ENCODE measurements at regions of chr12 and their contacts with region 1.

Region 1: GRCh38 chr12:93502802-93503623 is 35.7 kb downstream of the MRPL42 start:
- DNase-seq: peak; percentile 48 to 75
- H3K4me3 ChIP-seq: no peak overlapping the region
- H3K27ac ChIP-seq: no peak overlapping the region
- H3K4me1 ChIP-seq: no peaks in the 10 kb centered on the region
- H3K27me3 ChIP-seq: no peaks in the 10 kb centered on the region
- CTCF ChIP-seq: peak in 5 of 7 experiments; percentile 49 to 80 (median 74)
- EP300 ChIP-seq: no peak
- POLR2A ChIP-seq: no peak

Region 2: GRCh38 chr12:93550748-93551611 is 48.0 kb after region 1 on chr12:
- intact Hi-C with region 1: no loop called
- DNase-seq: no peak
- H3K4me3 ChIP-seq: no peak overlapping the region
- H3K27ac ChIP-seq: no peak overlapping the region
- H3K4me1 ChIP-seq: no peaks in the 10 kb centered on the region
- H3K27me3 ChIP-seq: no peaks in the 10 kb centered on the region
- CTCF ChIP-seq: no peak
- EP300 ChIP-seq: no peak
- POLR2A ChIP-seq: no peak

Region 3: DNA sequence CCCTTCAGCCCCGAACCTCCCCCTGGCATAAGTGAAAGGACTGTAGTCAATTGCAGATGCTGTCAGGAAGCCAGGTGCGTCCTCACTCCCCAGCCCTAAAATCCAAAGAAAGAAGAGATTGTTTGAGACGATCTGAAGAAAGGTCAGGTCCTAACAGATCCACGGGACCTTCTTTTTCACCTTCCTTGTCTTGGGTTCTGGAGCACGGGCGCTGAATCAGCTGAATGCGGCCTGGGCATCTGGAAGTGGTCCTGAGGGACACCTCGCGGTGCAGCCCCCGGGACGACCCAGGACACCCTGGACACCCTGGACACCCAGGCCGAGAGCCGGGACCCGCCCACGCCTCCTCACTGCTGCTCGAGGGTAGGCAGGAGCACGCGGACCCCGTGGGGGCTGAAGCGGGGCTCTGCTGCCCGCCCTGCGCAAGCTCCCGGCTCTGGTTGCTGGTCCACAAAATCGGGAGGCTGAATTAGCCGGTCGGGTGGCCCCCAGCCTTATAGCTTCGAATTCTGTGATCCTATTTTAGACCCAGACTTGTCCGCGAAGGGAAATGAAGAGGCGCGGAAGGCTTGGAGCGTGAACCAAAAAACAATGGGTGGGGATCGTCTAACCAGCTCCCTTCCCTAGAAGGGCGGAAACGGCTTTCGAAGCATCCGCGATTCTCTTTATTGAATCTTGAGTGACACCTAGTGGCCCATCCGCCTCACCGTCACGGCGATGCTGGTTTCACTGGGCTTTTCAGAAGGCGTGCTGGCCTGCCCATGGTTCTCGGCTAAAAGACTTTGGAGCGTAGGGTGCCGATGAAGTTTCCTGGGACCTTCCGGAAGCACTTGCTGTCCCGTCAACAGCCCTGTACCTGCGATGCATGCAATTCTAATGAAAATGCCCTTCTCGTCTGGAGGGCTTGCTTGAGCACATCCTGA is 599.0 kb after region 1 on chr12:
- intact Hi-C with region 1: loop called (anchors 5 kb)
- DNase-seq: peak; percentile 88 to 95
- H3K4me3 ChIP-seq: peak overlapping the region; percentile 54 to 82 (median 72)
- H3K27ac ChIP-seq: peak overlapping the region in 4 of 5 donors; percentile 42 to 75 (median 54)
- H3K4me1 ChIP-seq: peaks cover 5 to 26% (median 19%) of the 10 kb centered on the region in 4 donors
- H3K27me3 ChIP-seq: peaks cover 0 to 34% (median 7%) of the 10 kb centered on the region in 3 donors
- CTCF ChIP-seq: peak in 5 of 7 experiments; percentile 52 to 80 (median 66)
- EP300 ChIP-seq: no peak
- POLR2A ChIP-seq: no peak

Measured in stomach (tissue), 19 donors.